ENCODE measurements at regions of chr17 and their contacts with region 1.

Region 1: GRCh38 chr17:35578197-35578928 is at the start of gene PEX12:
- DNase-seq: peak; percentile 87 to 91
- ATAC-seq: peak; percentile 98 to 100
- H3K4me3 ChIP-seq: peak within 1 kb of the TSS; percentile 68 to 88 (median 80)
- H3K27ac ChIP-seq: peak within 1 kb of the TSS; percentile 85 to 94 (median 90)
- H3K4me1 ChIP-seq: peaks cover 18 to 24% of the 10 kb centered on the region in 2 donors
- H3K27me3 ChIP-seq: no peaks in the 10 kb centered on the region
- CTCF ChIP-seq: peak in 1 of 5 experiments; percentile 15
- POLR2A ChIP-seq: peak; percentile 70 to 84
- total RNA-seq, gene PEX12: 4.4 to 14.2 (median 6.2) TPM

Region 2: DNA sequence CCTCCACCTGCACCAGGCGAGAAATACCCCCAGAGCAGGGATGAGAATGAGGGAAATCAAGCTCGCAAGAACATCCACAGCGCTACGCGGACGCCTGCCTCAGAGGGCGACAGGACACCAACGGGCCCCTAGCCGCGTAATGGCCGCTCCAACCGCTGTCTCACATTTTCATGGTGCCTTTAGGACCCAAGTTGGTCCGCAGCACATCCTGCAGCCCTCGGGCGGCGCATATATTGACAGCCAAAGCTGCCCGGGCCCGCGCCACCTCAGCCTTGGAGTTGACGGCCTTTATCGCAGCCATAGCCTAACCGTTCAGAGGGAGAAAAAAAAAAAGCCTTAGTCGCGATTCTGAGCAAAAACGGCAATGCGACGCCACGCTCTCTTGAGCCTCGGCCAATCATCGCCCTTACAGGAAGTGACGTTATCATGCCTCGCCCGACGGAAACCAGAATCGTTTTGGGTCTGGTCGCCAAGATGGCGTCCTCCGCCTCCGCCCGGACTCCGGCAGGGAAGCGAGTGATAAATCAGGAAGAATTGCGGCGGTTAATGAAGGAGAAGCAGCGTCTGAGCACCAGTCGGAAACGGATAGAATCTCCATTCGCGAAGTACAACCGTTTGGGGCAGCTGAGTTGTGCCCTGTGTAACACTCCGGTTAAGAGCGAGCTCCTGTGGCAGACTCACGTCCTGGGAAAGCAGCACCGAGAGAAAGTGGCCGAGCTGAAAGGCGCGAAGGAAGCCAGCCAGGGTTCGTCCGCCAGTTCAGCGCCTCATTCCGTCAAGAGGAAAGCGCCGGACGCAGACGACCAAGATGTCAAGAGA is 617.1 kb before region 1 on chr17 and contains the starts of genes CCT6B and ZNF830:
- in situ Hi-C with region 1: no loop called
- intact Hi-C with region 1: loop called (anchors 10 kb)
- DNase-seq: peak; percentile 86 to 89
- ATAC-seq: peak; percentile 99 to 100
- H3K4me3 ChIP-seq: peak within 1 kb of the TSS; percentile 77 to 97 (median 92)
- H3K27ac ChIP-seq: peak within 1 kb of the TSS; percentile 90 to 98 (median 93)
- H3K4me1 ChIP-seq: peaks cover 23 to 26% of the 10 kb centered on the region in 2 donors
- H3K27me3 ChIP-seq: no peaks in the 10 kb centered on the region
- CTCF ChIP-seq: no peak
- POLR2A ChIP-seq: peak; percentile 51 to 60
- total RNA-seq, gene CCT6B: 1.4 to 5.4 (median 2.8) TPM
- total RNA-seq, gene ZNF830: 6.0 to 11.0 (median 7.2) TPM

Region 3: DNA sequence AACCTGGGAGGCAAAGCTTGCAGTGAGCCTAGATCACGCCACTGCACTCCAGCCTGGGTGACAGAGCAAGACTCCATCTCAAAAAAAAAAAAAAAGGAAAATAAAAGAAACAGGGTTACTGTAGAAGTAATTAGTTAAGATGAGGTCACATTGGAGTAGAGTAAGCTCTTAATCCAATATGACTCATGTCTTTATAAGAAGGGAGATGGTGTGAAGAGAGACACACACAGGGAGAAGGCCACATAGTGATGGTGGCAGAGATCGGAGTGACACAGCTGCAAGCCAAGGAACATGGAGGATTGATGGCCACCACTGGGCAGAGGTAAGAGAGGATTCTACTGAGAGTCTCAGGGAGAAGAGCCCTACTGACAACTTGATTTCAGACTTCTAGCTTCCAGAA is 350.8 kb before region 1 on chr17:
- in situ Hi-C with region 1: no loop called
- intact Hi-C with region 1: no loop called
- DNase-seq: no peak
- ATAC-seq: no peak
- H3K4me3 ChIP-seq: no peak overlapping the region
- H3K27ac ChIP-seq: no peak overlapping the region
- H3K4me1 ChIP-seq: no peaks in the 10 kb centered on the region
- H3K27me3 ChIP-seq: no peaks in the 10 kb centered on the region
- CTCF ChIP-seq: no peak
- POLR2A ChIP-seq: no peak

Region 4: GRCh38 chr17:35432176-35433074 is 145.9 kb before region 1 on chr17 and contains the start of gene SLFN12:
- in situ Hi-C with region 1: no loop called
- intact Hi-C with region 1: no loop called
- DNase-seq: peak; percentile 24 to 35
- ATAC-seq: peak; percentile 82 to 83
- H3K4me3 ChIP-seq: peak within 1 kb of the TSS; percentile 53 to 67 (median 58)
- H3K27ac ChIP-seq: peak within 1 kb of the TSS; percentile 72 to 78 (median 75)
- H3K4me1 ChIP-seq: peaks cover 0 to 8% of the 10 kb centered on the region in 2 donors
- H3K27me3 ChIP-seq: peaks cover 7 to 15% (median 13%) of the 10 kb centered on the region in 3 donors
- CTCF ChIP-seq: no peak
- POLR2A ChIP-seq: peak in 1 of 2 donors; percentile 32
- total RNA-seq, gene SLFN12: 0.76 to 2.2 (median 1.3) TPM

Measured in gastrocnemius medialis (tissue), 4 donors.